ENCODE measurements at regions of chr3 and their contacts with region 1.

Region 1: GRCh38 chr3:61288446-61288845 is 37.2 kb upstream of the FHIT start:
- DNase-seq: no peak
- ATAC-seq: no peak
- H3K4me3 ChIP-seq: no peak overlapping the region
- H3K27ac ChIP-seq: no peak overlapping the region
- H3K4me1 ChIP-seq: no peaks in the 10 kb centered on the region
- H3K27me3 ChIP-seq: no peaks in the 10 kb centered on the region
- CTCF ChIP-seq: no peak
- POLR2A ChIP-seq: no peak

Region 2: DNA sequence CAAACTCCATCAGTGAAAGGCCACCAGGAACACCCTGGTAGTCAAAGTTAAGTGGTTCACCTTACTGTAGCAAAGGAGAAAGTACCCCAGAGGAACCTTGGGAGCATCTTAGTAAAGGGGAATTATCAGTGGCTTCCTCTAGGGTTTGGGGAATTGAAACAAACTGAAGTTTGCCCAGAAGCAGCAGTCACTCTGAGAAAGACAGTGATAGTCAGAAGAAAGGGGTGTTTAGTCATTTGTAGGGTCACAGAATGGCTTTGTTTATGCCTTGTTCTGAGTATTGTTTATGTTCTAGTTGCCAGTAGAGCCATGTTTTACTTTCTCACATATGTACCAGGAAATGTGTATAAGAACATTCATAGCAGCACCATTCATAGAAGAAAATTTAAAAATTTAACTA is 131.0 kb before region 1 on chr3:
- in situ Hi-C with region 1: no loop called
- intact Hi-C with region 1: no loop called
- DNase-seq: no peak
- ATAC-seq: no peak
- H3K4me3 ChIP-seq: no peak overlapping the region
- H3K27ac ChIP-seq: no peak overlapping the region
- H3K4me1 ChIP-seq: no peaks in the 10 kb centered on the region
- H3K27me3 ChIP-seq: no peaks in the 10 kb centered on the region
- CTCF ChIP-seq: no peak
- POLR2A ChIP-seq: no peak

Region 3: DNA sequence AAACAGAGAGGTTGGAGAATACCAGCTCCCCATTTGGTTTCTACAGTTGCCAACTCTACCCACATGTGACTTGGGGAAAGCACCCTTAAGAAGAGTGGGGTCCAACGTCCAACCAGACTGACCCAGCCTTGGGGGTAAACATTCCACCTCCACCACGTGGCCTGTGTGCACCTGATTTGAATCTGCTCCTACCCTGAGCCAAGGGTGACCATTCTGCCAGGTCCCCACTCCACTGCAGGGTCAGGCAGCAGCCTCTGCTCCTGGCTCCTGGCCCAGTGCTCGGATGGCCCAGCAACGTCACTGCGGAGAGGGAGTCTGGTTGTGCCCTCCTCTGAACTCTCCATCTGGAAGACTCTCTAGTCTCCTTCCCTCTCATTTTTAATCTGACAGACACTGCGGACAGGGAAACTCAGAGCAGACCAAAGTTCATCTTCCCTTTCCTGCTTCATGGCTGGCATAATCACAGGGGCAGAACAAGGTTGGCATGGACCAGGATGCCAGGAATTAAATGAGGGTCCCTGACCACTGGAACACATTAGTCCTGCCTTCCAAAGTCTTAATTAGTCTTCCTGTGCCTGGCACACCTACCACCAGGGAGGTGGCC is 66.6 kb before region 1 on chr3:
- in situ Hi-C with region 1: no loop called
- intact Hi-C with region 1: loop called (anchors 10 kb)
- DNase-seq: no peak
- ATAC-seq: no peak
- H3K4me3 ChIP-seq: no peak overlapping the region
- H3K27ac ChIP-seq: no peak overlapping the region
- H3K4me1 ChIP-seq: no peaks in the 10 kb centered on the region
- H3K27me3 ChIP-seq: no peaks in the 10 kb centered on the region
- CTCF ChIP-seq: no peak
- POLR2A ChIP-seq: no peak

Measured in gastrocnemius medialis (tissue), 4 donors.